HEK293 (cell line): ENCODE measurements at regions of chr15 and their contacts with region 1.

Region 1: GRCh38 chr15:65869127-65869953 is at the start of gene RAB11A:
- H3K4me3 ChIP-seq: peak within 1 kb of the TSS; percentile 94
- H3K27ac ChIP-seq: peak within 1 kb of the TSS; percentile 94
- H3K4me1 ChIP-seq: 0 out of 2 replicates have a peak, but pooled peaks cover 4% of the 10 kb centered on the region
- CTCF ChIP-seq: peak; percentile 97

Region 2: DNA sequence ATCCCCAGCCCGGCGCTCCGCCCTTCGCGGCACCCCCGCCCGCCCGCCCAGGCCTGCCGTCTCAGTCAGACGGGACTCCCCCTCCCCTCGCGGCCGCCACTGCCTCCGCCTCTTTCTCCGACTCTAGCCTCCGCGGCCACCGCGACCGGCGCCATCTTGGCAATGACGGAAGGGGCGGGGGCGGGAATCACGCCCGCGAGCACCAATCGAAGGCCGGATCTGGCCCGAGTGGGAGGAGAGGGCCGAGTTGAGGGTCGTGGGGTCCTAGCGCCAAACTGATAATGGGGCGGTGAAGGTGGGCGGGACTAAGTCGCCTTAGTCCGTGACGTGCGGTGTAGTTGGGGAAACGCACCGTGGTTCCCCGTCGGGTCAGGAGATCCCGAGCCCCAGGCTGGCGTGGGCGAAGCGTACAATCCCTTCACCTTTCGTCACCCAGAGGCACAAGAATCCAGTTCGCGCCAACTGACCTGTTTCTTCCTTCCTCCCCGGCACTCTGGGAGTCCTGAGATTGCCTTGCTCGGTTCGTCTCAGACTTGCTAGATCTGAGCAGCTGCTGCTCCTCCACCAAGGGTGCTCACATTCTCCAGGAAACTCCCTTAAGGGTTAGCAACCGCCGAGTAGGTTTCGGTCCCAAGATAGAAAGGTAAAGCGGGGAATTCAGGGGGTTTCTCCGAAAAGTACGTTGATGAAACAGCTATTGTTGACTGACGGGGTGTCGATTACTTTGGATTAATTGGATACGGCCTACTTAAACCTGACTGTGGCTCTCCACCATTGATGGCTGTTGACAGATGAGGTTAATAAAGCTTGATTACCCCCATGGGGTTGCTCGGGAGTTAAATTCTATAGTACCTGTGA is 77.0 kb before region 1 on chr15 and contains the start of gene DENND4A:
- CTCF ChIA-PET with region 1: no interaction called
- POLR2A ChIA-PET with region 1: interaction called, 17 read pairs
- H3K4me3 ChIP-seq: peak within 1 kb of the TSS; percentile 70
- H3K27ac ChIP-seq: peak within 1 kb of the TSS; percentile 81
- H3K4me1 ChIP-seq: peaks cover 17% of the 10 kb centered on the region
- CTCF ChIP-seq: no peak

Region 3: DNA sequence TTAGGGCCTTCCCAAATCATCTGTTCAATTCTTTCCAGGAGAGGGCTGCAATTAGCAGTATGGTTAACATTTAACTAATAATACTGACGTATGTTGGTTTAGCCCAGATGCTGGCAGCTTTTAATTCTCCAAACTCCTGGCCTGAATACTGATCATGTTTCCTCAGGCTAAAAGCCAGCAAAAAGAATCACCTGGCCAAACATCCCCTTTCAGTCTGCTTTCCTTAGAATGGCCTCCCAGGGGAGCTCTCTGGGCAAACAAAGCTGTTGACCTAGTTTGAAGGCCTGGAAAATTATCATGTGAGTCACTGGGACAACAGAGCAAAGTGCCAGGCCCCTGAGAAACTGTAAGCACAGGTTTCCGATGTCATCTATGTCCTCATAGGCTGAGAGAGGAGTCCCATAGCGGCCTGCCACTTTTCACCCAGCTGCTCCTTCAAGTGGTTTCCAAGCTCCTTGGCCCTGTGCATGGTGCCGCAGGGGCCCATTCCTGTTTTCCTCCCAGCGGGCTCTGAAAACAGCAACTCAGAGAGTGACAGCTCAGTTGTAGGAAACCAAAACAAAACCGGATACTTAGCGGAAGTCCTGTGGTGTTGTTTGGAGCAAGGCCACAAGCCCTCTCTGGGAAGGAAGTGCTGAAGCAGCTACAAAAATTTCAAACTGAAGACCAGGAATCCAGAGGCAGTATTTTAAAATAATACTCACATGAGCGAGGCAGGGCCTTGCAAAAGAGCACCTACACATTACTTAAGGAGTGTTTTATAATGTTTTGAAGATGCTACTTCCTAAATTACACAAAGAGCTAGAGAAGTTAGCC is 36.6 kb before region 1 on chr15:
- CTCF ChIA-PET with region 1: interaction called, 4 read pairs
- POLR2A ChIA-PET with region 1: interaction called, 27 read pairs
- H3K4me3 ChIP-seq: no peak overlapping the region
- H3K27ac ChIP-seq: peak overlapping the region; percentile 79
- H3K4me1 ChIP-seq: peaks cover 15% of the 10 kb centered on the region
- CTCF ChIP-seq: 0 out of 2 replicates have a peak, but pooled peaks have one; percentile 31